GM12878 (cell line): ENCODE measurements at regions of chr20 and their contacts with region 1.

Region 1: GRCh38 chr20:53738039-53738944 is 144.7 kb upstream of the ZNF217 start:
- DNase-seq: no peak
- ATAC-seq: no peak
- H3K4me3 ChIP-seq: 0 out of 2 replicates have a peak overlapping the region, but pooled peaks have one; percentile 69
- H3K27ac ChIP-seq: peak overlapping the region; percentile 86
- H3K4me1 ChIP-seq: peaks cover 56% of the 10 kb centered on the region
- H3K27me3 ChIP-seq: no peaks in the 10 kb centered on the region
- CTCF ChIP-seq: no peak
- EP300 ChIP-seq: no peak
- POLR2A ChIP-seq: no peak
- RAD21 ChIP-seq: no peak

Region 2: DNA sequence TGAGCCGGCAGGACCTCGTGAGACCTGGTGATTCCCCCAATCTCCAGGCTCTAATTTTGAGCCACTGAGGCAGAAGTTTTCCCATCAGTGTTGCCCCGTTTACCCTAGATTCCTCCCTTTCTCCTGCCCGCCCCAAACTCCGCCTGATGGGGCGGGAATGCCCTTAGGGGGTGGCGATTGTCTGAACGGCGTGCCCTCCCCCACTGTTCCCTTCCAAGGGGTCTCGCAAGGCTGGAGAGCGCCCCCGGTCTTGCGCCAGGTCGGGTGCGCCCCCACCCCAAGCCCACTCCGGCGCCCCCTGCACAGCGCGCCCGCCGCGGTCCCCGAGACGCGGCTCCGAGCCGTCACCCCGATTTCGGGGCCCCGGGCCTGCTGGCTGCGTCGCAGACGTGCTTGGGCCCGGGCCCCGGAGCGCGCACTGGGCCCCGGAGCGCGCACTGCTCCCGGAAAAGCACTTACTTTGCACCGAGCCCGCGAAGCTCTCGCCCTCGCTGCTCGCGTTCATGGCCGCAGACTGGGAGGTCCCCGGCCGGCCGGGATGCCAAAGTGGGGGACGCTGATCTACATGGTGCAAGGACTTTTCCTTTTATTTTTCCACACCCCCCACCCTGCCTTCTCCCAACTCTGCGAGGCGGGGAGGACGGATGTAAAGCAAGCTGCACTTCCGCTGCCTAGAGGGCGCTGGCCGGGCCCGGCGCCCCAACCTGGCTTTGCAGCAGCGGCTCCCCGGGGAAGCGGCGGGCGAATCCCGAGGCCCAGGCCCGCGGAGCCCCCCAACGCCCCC is 1547.0 kb before region 1 on chr20 and contains the start of gene ZFP64:
- CTCF ChIA-PET with region 1: no interaction called
- POLR2A ChIA-PET with region 1: no interaction called
- RAD21 ChIA-PET with region 1: no interaction called
- SMC1A ChIA-PET with region 1: no interaction called
- in situ Hi-C with region 1: loop called (anchors 25 kb)
- intact Hi-C with region 1: no loop called
- DNase-seq: no peak
- ATAC-seq: peak; percentile 85
- H3K4me3 ChIP-seq: peak within 1 kb of the TSS; percentile 91
- H3K27ac ChIP-seq: peak within 1 kb of the TSS; percentile 93
- H3K4me1 ChIP-seq: peaks cover 3% of the 10 kb centered on the region; the same call in 1 of the 2 replicates
- H3K27me3 ChIP-seq: no peaks in the 10 kb centered on the region
- CTCF ChIP-seq: peak; percentile 64 to 77 (median 71); a peak in 5 of 6 replicates
- EP300 ChIP-seq: 0 out of 4 replicates have a peak, but pooled peaks of 1 of the 2 experiments have one; percentile 30
- POLR2A ChIP-seq: peak; percentile 80
- RAD21 ChIP-seq: peak; percentile 31; the same call in 1 of the 2 replicates
- polyA plus RNA-seq, gene ZFP64: 2.3 to 3.3 TPM

Region 3: DNA sequence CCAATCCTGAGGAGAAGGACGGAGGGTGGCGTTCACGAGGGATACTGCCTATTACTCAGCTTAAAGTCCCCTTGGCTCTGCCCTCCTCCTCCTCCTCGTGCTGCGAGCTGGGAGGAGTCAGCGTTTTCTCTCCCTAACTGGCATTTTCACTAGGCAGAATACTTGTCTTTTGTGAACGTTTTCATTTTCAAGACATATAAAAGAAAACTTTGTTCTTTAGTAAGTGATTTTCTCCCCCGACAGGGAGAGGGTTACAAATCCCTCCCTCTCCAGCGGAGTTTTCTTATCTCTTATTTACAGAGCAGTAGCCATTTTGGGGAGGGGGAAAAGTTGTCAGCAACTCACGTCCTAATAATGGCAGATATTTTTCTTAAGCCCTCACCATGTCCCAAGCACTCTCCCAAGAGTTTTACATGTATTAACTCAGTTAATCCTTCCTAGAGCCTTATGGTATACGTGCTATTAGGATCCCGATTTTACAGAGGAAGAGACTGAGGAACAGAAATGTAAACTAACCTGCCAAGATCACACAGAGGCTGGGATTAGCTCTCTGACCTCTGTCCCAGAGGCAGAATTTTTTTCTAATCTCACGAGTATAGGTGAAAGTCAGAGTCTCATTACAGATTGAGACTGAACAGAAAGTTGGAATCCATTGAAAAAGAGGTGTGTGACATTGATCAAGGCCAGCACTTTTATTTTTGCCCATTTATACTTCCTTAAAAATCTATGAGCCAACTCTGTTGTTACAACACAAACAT is 114.7 kb before region 1 on chr20:
- CTCF ChIA-PET with region 1: interaction called, 7 read pairs
- POLR2A ChIA-PET with region 1: interaction called, 9 read pairs
- RAD21 ChIA-PET with region 1: interaction called, 21 read pairs
- SMC1A ChIA-PET with region 1: interaction called, 16 read pairs
- in situ Hi-C with region 1: no loop called
- intact Hi-C with region 1: no loop called
- DNase-seq: peak; percentile 60
- ATAC-seq: peak; percentile 81
- H3K4me3 ChIP-seq: peak overlapping the region; percentile 54
- H3K27ac ChIP-seq: peak overlapping the region; percentile 99
- H3K4me1 ChIP-seq: peaks cover 38% of the 10 kb centered on the region
- H3K27me3 ChIP-seq: no peaks in the 10 kb centered on the region
- CTCF ChIP-seq: 0 out of 6 replicates have a peak, but pooled peaks of 1 of the 3 experiments have one; percentile 8
- EP300 ChIP-seq: no peak
- POLR2A ChIP-seq: peak; percentile 61
- RAD21 ChIP-seq: 0 out of 2 replicates have a peak, but pooled peaks have one; percentile 10

Region 4: GRCh38 chr20:53660078-53660909 is 78.0 kb before region 1 on chr20:
- CTCF ChIA-PET with region 1: interaction called, 6 read pairs
- POLR2A ChIA-PET with region 1: interaction called, 7 read pairs
- RAD21 ChIA-PET with region 1: interaction called, 15 read pairs
- SMC1A ChIA-PET with region 1: interaction called, 149 read pairs
- in situ Hi-C with region 1: no loop called
- intact Hi-C with region 1: loop called (anchors 5 kb)
- DNase-seq: no peak
- ATAC-seq: peak; percentile 27
- H3K4me3 ChIP-seq: peak overlapping the region; percentile 63
- H3K27ac ChIP-seq: peak overlapping the region; percentile 84
- H3K4me1 ChIP-seq: peaks cover 61% of the 10 kb centered on the region
- H3K27me3 ChIP-seq: no peaks in the 10 kb centered on the region
- CTCF ChIP-seq: no peak
- EP300 ChIP-seq: no peak; a peak in 1 of 4 replicates
- POLR2A ChIP-seq: peak; percentile 41; the same call in 1 of the 2 replicates
- RAD21 ChIP-seq: 0 out of 2 replicates have a peak, but pooled peaks have one; percentile 4

Region 5: DNA sequence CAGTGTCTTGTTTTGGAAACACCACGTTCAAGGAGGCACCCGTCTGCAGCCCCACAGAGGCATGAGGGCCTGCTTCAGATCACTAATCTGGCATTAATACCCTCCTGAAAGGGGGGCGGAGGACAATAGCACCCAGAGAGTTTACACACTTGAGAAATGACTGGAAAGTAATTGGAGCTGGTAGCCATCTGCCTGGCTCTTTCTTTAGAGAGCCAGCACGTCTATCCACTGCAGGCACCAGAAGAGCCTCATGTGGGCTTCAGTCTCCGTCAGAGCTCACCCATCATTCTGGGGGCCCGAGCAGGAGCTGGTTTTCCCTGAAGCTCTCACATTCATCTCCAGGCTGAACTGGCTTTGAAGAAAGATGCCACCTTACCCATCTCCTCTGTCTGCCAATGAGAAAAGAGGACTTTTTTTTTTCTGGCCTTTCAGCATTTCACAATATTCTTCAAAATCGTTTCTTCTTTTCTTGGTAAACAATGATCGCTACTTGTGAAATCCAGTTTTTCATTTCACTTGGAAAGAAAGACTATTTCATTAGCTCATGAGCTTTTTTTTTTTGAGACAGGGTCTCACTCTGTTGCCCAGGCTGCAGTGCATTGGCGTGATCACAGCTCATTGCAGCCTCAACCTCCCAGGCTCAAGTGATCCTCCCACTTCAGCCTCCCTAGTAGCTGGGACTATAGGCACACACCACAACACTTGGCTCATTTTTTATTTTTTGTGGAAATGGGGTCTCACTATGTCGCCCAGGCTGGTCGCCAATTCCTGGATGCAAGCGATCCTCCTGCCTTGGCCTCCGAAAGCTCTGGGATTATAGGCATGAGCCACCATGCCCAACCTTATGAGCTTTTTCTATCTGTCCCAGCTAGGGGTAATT is 19.9 kb before region 1 on chr20:
- CTCF ChIA-PET with region 1: interaction called, 7 read pairs
- POLR2A ChIA-PET with region 1: interaction called, 9 read pairs
- RAD21 ChIA-PET with region 1: interaction called, 10 read pairs
- SMC1A ChIA-PET with region 1: interaction called, 31 read pairs
- in situ Hi-C with region 1: no loop called
- intact Hi-C with region 1: no loop called
- DNase-seq: no peak
- ATAC-seq: no peak
- H3K4me3 ChIP-seq: no peak overlapping the region
- H3K27ac ChIP-seq: no peak overlapping the region
- H3K4me1 ChIP-seq: peaks cover 22% of the 10 kb centered on the region
- H3K27me3 ChIP-seq: no peaks in the 10 kb centered on the region
- CTCF ChIP-seq: no peak
- EP300 ChIP-seq: no peak
- POLR2A ChIP-seq: no peak
- RAD21 ChIP-seq: no peak

Region 6: GRCh38 chr20:53899351-53900167 is 161.3 kb after region 1 on chr20:
- CTCF ChIA-PET with region 1: no interaction called
- POLR2A ChIA-PET with region 1: interaction called, 5 read pairs
- RAD21 ChIA-PET with region 1: interaction called, 3 read pairs
- SMC1A ChIA-PET with region 1: interaction called, 11 read pairs
- in situ Hi-C with region 1: no loop called
- intact Hi-C with region 1: no loop called
- DNase-seq: peak; percentile 95
- ATAC-seq: peak; percentile 88
- H3K4me3 ChIP-seq: no peak overlapping the region
- H3K27ac ChIP-seq: peak overlapping the region; percentile 62
- H3K4me1 ChIP-seq: peaks cover 39% of the 10 kb centered on the region
- H3K27me3 ChIP-seq: no peaks in the 10 kb centered on the region
- CTCF ChIP-seq: no peak
- EP300 ChIP-seq: peak in 1 of 2 experiments; percentile 74; a peak in 2 of 4 replicates
- POLR2A ChIP-seq: no peak
- RAD21 ChIP-seq: no peak